Activated CD4-positive, alpha-beta memory T cell treated with anti-CD3 and anti-CD28 coated beads for 36 hours (primary cell): ENCODE measurements at regions of chr5 and their contacts with region 1.

Region 1: GRCh38 chr5:176660860-176661641 is 13.8 kb downstream of the TSPAN17 start:
- DNase-seq: peak; percentile 85
- H3K4me3 Mint-ChIP-seq: no peak overlapping the region
- H3K27ac Mint-ChIP-seq: no peak overlapping the region
- H3K4me1 Mint-ChIP-seq: peaks cover 27% of the 10 kb centered on the region
- H3K27me3 Mint-ChIP-seq: peaks cover 8% of the 10 kb centered on the region

Region 2: GRCh38 chr5:176492431-176492830 is 168.6 kb before region 1 on chr5:
- CTCF ChIA-PET with region 1: no interaction called
- POLR2A ChIA-PET with region 1: no interaction called
- intact Hi-C with region 1: no loop called
- DNase-seq: no peak
- H3K4me3 Mint-ChIP-seq: no peak overlapping the region
- H3K27ac Mint-ChIP-seq: no peak overlapping the region
- H3K4me1 Mint-ChIP-seq: peaks cover 11% of the 10 kb centered on the region
- H3K27me3 Mint-ChIP-seq: no peaks in the 10 kb centered on the region

Region 3: GRCh38 chr5:176590035-176590717 is 70.9 kb before region 1 on chr5:
- CTCF ChIA-PET with region 1: no interaction called
- POLR2A ChIA-PET with region 1: no interaction called
- intact Hi-C with region 1: no loop called
- DNase-seq: no peak
- H3K4me3 Mint-ChIP-seq: no peak overlapping the region
- H3K27ac Mint-ChIP-seq: no peak overlapping the region
- H3K4me1 Mint-ChIP-seq: no peaks in the 10 kb centered on the region
- H3K27me3 Mint-ChIP-seq: no peaks in the 10 kb centered on the region

Region 4: DNA sequence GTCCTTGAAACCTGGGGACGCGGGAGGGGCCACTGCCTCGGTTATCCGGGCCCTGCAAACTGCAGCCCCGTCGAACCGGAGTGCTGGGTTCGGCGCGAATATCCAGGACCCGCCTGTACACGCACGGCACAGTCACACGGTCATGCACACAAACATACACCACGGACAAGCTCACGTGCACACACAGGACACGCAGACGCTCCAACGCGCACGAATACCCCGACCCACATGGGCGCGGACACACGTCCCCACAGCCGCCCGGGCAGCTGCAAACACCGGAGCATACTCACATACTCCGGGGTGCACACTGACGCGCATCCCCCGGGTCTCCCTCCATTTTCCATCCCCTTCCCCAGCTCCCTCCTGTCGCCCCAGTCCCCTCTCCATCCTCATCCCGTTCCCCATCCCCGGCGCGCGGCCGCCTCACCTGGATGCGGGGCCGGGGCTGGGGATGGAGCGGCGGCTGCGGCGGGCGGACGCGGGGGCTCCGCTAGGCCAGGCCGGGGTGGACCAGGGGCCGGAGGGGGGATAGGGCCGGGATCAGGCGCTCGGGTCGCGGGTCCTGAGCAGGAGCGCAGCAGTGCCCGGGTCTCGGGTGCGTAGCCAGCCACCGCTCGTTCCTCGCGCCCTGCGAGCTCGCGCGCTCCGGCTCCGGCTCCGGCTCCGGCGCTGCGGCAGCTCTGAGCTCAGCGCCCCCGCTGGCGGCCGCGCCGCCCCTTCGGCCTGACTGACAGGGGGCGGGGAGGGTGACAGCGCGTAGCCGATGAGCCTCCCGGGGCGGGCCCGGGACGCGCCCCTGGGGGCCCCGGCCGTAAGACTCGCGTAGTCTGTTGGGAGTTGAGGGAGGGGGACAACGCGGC is 31.0 kb before region 1 on chr5 and contains the starts of genes EIF4E1B and SNCB:
- CTCF ChIA-PET with region 1: interaction called, 11 read pairs
- POLR2A ChIA-PET with region 1: no interaction called
- intact Hi-C with region 1: no loop called
- DNase-seq: peak; percentile 67
- H3K4me3 Mint-ChIP-seq: no peak within 1 kb of the TSS
- H3K27ac Mint-ChIP-seq: no peak within 1 kb of the TSS
- H3K4me1 Mint-ChIP-seq: peaks cover 13% of the 10 kb centered on the region
- H3K27me3 Mint-ChIP-seq: peaks cover 69% of the 10 kb centered on the region
- total RNA-seq, gene EIF4E1B: not detected
- total RNA-seq, gene SNCB: 0.31 TPM in 1 of 2 experiments, not detected in the other

Region 5: DNA sequence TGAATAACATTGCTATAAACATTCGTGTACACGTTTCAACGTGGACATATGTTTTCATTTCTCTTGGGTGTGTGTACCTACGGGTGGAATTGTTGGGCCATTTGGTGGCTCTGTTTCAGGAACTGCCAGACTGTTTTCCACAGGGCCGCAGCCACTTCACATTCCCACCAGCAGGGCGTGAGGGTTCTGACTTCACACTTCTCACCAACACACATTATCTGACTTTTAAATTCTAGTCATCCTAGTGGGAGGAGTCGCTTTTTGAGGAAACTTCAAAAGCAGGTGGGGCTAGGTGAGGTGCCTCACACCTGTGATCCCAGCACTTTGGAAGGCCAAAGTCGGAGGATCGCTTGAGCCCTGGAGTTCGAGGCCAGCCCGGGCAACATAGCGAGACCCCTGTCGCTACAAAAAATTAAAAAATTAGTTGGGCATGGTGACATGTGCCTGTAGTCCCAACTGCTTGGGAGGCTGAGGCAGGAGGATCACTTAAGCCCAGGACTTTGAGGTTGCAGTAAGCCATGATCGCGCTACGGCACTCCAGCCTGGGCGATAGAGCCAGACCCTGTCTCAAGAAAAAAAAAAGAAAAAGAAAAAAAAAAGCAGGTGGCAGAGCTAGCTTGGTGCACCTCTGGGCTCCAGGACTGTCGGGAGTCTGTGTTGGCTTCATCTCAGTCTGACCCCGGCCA is 14.8 kb after region 1 on chr5:
- CTCF ChIA-PET with region 1: interaction called, 49 read pairs
- POLR2A ChIA-PET with region 1: no interaction called
- intact Hi-C with region 1: no loop called
- DNase-seq: no peak
- H3K4me3 Mint-ChIP-seq: no peak overlapping the region
- H3K27ac Mint-ChIP-seq: no peak overlapping the region
- H3K4me1 Mint-ChIP-seq: no peaks in the 10 kb centered on the region
- H3K27me3 Mint-ChIP-seq: peaks cover 34% of the 10 kb centered on the region

Region 6: GRCh38 chr5:176901260-176902101 is 240.4 kb after region 1 on chr5:
- CTCF ChIA-PET with region 1: interaction called, 19 read pairs
- POLR2A ChIA-PET with region 1: no interaction called
- intact Hi-C with region 1: no loop called
- DNase-seq: peak; percentile 29
- H3K4me3 Mint-ChIP-seq: no peak overlapping the region
- H3K27ac Mint-ChIP-seq: peak overlapping the region; percentile 54
- H3K4me1 Mint-ChIP-seq: peaks cover 39% of the 10 kb centered on the region
- H3K27me3 Mint-ChIP-seq: no peaks in the 10 kb centered on the region

Region 7: DNA sequence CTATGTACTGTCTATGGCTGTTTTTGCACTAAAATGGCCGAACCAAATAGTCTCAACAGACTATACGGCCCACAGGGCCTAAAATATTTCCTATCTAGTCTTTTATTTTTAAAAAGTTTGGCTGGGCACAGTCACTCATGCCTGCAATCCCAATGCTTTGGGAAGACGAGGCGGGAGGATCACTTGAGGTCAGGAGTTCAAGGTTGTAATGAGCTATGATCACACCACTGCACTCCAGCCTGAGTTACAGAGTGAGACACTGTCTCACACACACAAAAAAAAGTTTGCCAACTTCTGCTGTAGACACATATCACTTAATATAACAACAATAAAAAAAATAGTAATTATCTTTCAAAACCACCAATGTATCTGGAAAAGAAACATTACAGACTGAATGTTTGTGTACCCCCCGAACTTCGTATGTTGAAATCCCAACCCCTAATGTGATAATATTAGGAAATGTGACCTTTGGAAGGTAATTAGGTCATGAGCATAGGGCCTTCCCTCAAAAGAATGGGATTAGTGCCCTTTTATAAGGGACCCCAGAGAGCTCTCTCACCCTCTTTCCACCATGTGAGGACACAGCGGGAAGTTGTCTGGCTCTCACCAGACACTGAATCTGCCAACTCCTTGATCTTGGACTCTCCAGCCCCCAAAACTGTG is 291.6 kb after region 1 on chr5:
- CTCF ChIA-PET with region 1: interaction called, 23 read pairs
- POLR2A ChIA-PET with region 1: no interaction called
- intact Hi-C with region 1: no loop called
- DNase-seq: no peak
- H3K4me3 Mint-ChIP-seq: no peak overlapping the region
- H3K27ac Mint-ChIP-seq: no peak overlapping the region
- H3K4me1 Mint-ChIP-seq: no peaks in the 10 kb centered on the region
- H3K27me3 Mint-ChIP-seq: no peaks in the 10 kb centered on the region

Region 8: DNA sequence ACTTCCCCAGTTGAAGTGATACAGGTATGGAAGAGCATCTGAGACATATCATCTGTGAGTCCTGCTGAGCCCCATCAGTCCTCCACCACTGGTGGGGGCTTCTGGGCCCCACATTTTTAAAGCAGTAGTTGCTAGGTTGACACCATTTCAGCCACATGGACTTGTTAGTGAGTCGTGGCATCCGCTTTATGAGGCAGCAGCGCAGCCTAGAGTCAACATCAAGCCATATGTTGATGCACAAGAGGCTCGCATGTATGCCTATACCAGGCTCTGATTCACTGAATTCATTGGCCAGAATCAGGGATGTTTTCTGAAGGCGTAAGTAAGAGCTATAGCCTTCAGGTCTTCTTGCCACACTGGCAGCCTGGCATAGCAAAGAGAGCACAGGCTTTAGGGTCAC is 388.2 kb after region 1 on chr5:
- CTCF ChIA-PET with region 1: no interaction called
- POLR2A ChIA-PET with region 1: no interaction called
- intact Hi-C with region 1: no loop called
- DNase-seq: peak; percentile 24
- H3K4me3 Mint-ChIP-seq: no peak overlapping the region
- H3K27ac Mint-ChIP-seq: no peak overlapping the region
- H3K4me1 Mint-ChIP-seq: no peaks in the 10 kb centered on the region
- H3K27me3 Mint-ChIP-seq: no peaks in the 10 kb centered on the region

Region 9: GRCh38 chr5:177071666-177072385 is 410.8 kb after region 1 on chr5:
- CTCF ChIA-PET with region 1: interaction called, 10 read pairs
- POLR2A ChIA-PET with region 1: no interaction called
- intact Hi-C with region 1: no loop called
- DNase-seq: peak; percentile 48
- H3K4me3 Mint-ChIP-seq: no peak overlapping the region
- H3K27ac Mint-ChIP-seq: no peak overlapping the region
- H3K4me1 Mint-ChIP-seq: peaks cover 2% of the 10 kb centered on the region
- H3K27me3 Mint-ChIP-seq: no peaks in the 10 kb centered on the region